Adrenal gland (tissue), 19 donors: ENCODE measurements at regions of chr2 and their contacts with region 1.

Region 1: DNA sequence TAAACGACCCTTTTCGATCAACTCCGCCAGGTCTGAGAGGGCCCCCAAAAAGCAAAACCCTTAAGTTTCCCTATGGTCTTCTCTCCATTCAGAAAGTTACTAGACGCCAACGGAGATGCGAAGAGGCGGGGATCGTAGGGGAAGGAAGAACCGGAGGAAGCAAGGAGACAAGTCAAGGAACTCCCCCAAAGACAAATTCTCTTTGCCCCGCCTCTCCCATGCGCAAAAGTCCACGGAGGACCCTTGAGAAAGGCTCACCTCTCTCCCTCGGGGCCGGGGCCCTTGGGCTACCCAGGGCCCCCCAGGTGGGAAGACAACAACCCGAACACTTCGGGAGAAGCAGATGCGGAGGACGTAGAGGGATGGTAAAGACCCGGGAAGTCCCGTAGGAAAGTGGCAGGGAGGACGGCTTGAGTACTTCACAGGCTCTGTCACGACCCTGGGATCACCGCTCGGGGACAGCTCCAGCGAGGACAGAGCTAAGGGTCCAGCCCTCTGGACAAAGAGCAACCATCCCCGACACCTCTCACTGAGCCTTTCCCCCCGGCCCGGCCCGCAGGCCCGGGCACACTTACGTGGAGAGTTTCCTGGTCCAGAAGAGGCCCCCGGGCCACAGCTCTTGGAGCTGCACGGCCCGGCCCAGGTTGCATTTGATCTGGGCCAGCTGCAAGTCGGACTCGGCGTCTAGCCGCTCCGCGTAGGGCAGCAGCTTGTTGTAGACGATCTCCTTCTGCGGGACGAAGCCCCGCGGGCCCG is 647 bp downstream of the PSME4 start:
- DNase-seq: peak; percentile 38 to 70 (median 47)
- H3K4me3 ChIP-seq: peak overlapping the region; percentile 69 to 90 (median 83)
- H3K27ac ChIP-seq: peak overlapping the region; percentile 70 to 98 (median 93)
- H3K4me1 ChIP-seq: peaks cover 23 to 38% of the 10 kb centered on the region in 2 donors
- H3K27me3 ChIP-seq: no peaks in the 10 kb centered on the region
- CTCF ChIP-seq: no peak
- POLR2A ChIP-seq: no peak

Region 2: DNA sequence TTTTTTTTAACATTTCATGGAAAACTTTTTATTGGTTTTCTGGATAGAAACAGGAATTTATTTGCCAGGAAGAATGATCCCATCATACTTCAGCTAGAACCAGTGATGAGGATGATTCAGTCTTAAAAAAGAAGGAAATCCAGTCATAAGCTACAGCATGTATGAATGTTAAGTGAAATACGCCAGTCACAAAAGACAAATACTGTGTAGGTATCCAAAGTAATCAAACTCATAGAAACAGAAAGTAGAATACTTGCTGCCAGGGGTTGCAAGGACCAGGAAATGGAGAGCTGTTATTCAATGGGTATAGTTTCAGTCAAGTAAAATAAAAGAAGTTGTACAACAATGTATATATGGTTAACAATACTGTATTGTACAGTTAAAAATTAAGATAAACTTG is 20.7 kb before region 1 on chr2:
- intact Hi-C with region 1: no loop called
- DNase-seq: no peak
- H3K4me3 ChIP-seq: no peak overlapping the region
- H3K27ac ChIP-seq: no peak overlapping the region
- H3K4me1 ChIP-seq: peaks cover 13% of the 10 kb centered on the region in 2 donors
- H3K27me3 ChIP-seq: no peaks in the 10 kb centered on the region
- CTCF ChIP-seq: no peak
- POLR2A ChIP-seq: no peak

Region 3: GRCh38 chr2:54081574-54081973 is 111.4 kb after region 1 on chr2:
- intact Hi-C with region 1: loop called in 1 of 2 experiments (anchors 10 kb)
- DNase-seq: no peak
- H3K4me3 ChIP-seq: no peak overlapping the region
- H3K27ac ChIP-seq: no peak overlapping the region
- H3K4me1 ChIP-seq: no peaks in the 10 kb centered on the region
- H3K27me3 ChIP-seq: no peaks in the 10 kb centered on the region
- CTCF ChIP-seq: no peak
- POLR2A ChIP-seq: no peak

Region 4: DNA sequence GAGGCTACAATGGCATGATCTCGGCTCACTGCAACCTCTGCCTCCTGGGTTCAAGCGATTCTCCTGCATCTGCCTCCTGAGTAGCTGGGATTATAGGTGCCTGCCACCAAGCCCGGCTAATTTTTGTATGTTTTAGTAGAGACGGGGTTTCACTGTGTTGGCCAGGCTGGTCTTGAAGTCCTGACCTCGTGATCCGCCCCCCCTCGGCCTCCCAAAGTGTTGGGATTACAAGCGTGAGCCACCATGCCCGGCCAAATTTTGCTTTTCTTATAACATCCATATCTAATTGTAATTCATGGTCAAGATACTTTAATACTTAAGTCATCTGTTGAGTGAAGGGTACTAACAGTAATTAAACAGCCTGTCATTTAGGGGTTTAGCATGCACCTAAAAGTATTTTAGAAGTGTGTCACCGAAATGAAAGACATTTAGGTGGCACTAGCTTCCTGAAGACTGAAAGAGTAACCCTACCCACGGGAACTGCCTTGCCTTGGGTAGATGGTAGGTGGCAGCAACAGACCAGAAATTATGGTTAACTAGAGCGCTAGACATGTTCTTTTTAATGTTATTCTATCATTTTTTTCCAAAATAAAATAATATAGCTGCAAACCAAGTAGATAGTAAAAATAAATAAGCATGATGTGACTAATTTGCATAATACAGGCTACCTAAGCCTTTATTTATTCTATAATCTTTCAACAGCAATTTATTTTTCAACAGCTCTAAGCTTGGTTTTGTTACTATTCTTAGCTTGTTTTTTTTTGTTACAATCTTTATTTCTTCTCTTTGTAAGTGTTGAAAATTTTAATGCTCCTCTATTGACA is 136.7 kb after region 1 on chr2:
- intact Hi-C with region 1: no loop called
- DNase-seq: peak; percentile 46 to 79 (median 60)
- H3K4me3 ChIP-seq: no peak overlapping the region
- H3K27ac ChIP-seq: no peak overlapping the region
- H3K4me1 ChIP-seq: peaks cover 0 to 27% of the 10 kb centered on the region in 2 donors
- H3K27me3 ChIP-seq: no peaks in the 10 kb centered on the region
- CTCF ChIP-seq: peak; percentile 59 to 84 (median 74)
- POLR2A ChIP-seq: no peak